ENCODE measurements at regions of chr2 and their contacts with region 1.

Region 1: GRCh38 chr2:27281855-27282559 is at the start of gene TRIM54:
- DNase-seq: no peak
- ATAC-seq: peak; percentile 37; a peak in 3 of 6 replicates
- H3K4me3 ChIP-seq: no peak within 1 kb of the TSS
- H3K27ac ChIP-seq: peak within 1 kb of the TSS; percentile 38 to 75
- H3K4me1 ChIP-seq: peaks cover 26% of the 10 kb centered on the region
- CTCF ChIP-seq: no peak
- EP300 ChIP-seq: no peak
- POLR2A ChIP-seq: no peak
- RAD21 ChIP-seq: no peak
- polyA plus RNA-seq, gene TRIM54: 0.05 and 0.14 TPM in 2 replicates

Region 2: DNA sequence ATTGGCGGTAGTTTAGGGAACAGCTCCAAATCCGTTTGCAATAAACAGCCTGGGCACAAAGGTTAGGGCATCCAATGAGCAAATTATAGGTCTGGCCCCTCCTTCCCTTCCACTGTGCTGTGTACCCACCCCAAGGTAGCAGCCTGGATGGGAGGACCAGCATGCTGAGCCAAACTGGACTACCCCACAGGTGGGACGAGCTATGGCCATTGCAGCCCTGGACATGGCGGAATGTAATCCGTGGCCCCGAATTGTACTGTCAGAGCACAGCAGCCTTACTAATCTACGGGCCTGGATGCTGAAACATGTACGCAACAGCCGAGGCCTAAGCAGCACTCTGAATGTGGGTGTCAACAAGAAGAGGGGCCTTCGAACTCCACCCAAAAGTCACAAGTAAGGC is 223.8 kb before region 1 on chr2:
- CTCF ChIA-PET with region 1: no interaction called
- POLR2A ChIA-PET with region 1: no interaction called
- DNase-seq: no peak
- ATAC-seq: no peak
- H3K4me3 ChIP-seq: no peak overlapping the region
- H3K27ac ChIP-seq: no peak overlapping the region
- H3K4me1 ChIP-seq: no peaks in the 10 kb centered on the region
- CTCF ChIP-seq: no peak
- EP300 ChIP-seq: no peak
- POLR2A ChIP-seq: no peak
- RAD21 ChIP-seq: no peak

Region 3: DNA sequence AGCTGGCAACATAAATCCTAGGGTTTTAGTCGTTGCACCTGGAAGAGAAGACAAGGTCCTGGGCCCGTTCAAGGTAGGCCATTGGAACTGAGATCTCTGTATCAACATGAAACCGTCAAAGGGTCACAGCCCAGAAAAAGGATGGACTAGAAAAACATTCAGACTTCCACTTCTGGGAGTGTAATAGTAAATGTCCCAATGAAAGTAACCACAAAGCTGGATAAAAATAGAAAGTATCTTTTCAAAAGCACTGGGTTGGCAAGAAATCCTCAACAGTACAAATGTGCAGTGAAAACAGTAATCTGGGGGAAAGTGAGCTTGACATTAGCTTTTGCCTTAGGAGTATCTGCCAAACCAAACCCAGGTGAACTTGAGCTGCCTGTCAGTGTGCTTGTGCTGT is 176.0 kb before region 1 on chr2:
- CTCF ChIA-PET with region 1: interaction called, 171 read pairs
- POLR2A ChIA-PET with region 1: interaction called, 3 read pairs
- DNase-seq: no peak
- ATAC-seq: no peak
- H3K4me3 ChIP-seq: no peak overlapping the region
- H3K27ac ChIP-seq: no peak overlapping the region
- H3K4me1 ChIP-seq: no peaks in the 10 kb centered on the region
- CTCF ChIP-seq: no peak
- EP300 ChIP-seq: no peak
- POLR2A ChIP-seq: no peak
- RAD21 ChIP-seq: no peak

Region 4: DNA sequence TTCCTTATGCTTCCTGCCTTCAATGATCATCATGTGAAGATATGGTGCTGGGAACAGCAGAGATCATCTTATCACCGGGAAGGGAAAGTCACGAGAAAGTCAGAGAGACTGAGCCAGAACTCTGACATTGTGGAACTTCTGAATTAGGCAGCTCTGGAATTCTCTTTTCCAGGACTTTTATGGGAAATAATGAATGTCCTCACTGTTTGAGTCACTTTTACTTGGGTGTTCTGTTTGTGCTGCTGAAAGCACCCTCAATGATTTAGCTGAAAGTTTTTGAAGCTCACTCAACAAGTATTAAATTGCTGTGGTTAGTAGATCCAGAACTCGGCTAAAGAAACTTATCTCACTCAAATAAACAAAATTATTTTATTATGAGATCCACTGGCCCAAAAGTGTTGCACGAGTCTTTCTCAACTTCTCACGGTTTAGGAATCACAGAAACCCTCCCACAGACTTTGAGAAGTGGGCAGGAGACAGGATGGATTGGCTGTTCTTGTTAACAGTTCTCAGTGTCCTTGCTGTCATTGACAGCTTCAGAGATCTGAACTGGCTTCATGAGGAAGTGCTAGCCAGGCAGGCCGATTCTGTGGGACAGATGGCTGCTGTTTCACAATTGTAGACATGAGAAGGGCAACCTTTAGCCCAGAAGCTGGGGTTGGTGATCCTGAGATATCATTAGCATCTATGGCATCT is 96.5 kb before region 1 on chr2:
- CTCF ChIA-PET with region 1: interaction called, 12 read pairs
- POLR2A ChIA-PET with region 1: no interaction called
- DNase-seq: no peak
- ATAC-seq: peak in 1 of 2 experiments; percentile 51; a peak in 3 of 6 replicates
- H3K4me3 ChIP-seq: no peak overlapping the region
- H3K27ac ChIP-seq: no peak overlapping the region
- H3K4me1 ChIP-seq: no peaks in the 10 kb centered on the region
- CTCF ChIP-seq: no peak
- EP300 ChIP-seq: no peak
- POLR2A ChIP-seq: no peak
- RAD21 ChIP-seq: no peak

Region 5: DNA sequence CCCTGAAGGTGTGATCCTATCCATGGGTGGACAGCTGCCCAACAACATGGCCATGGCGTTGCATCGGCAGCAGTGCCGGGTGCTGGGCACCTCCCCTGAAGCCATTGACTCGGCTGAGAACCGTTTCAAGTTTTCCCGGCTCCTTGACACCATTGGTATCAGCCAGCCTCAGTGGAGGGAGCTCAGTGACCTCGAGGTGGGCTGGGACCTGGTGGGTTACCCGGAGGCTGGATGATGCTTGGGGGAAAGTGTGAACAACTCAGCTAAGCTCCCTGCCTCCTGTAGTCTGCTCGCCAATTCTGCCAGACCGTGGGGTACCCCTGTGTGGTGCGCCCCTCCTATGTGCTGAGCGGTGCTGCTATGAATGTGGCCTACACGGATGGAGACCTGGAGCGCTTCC is 48.7 kb before region 1 on chr2:
- CTCF ChIA-PET with region 1: interaction called, 12 read pairs
- POLR2A ChIA-PET with region 1: no interaction called
- DNase-seq: no peak
- ATAC-seq: no peak
- H3K4me3 ChIP-seq: no peak overlapping the region
- H3K27ac ChIP-seq: no peak overlapping the region
- H3K4me1 ChIP-seq: no peaks in the 10 kb centered on the region
- CTCF ChIP-seq: no peak
- EP300 ChIP-seq: no peak
- POLR2A ChIP-seq: no peak
- RAD21 ChIP-seq: no peak

Region 6: GRCh38 chr2:27264753-27265535 is 17.1 kb before region 1 on chr2:
- CTCF ChIA-PET with region 1: interaction called, 302 read pairs
- POLR2A ChIA-PET with region 1: interaction called, 4 read pairs
- DNase-seq: peak; percentile 82 to 96
- ATAC-seq: peak; percentile 77 to 82
- H3K4me3 ChIP-seq: peak overlapping the region; percentile 75
- H3K27ac ChIP-seq: peak overlapping the region; percentile 32 to 73; a peak in 5 of 6 replicates
- H3K4me1 ChIP-seq: peaks cover 21% of the 10 kb centered on the region
- CTCF ChIP-seq: peak; percentile 71
- EP300 ChIP-seq: no peak
- POLR2A ChIP-seq: no peak
- RAD21 ChIP-seq: peak; percentile 40 to 59; a peak in 4 of 5 replicates

Region 7: DNA sequence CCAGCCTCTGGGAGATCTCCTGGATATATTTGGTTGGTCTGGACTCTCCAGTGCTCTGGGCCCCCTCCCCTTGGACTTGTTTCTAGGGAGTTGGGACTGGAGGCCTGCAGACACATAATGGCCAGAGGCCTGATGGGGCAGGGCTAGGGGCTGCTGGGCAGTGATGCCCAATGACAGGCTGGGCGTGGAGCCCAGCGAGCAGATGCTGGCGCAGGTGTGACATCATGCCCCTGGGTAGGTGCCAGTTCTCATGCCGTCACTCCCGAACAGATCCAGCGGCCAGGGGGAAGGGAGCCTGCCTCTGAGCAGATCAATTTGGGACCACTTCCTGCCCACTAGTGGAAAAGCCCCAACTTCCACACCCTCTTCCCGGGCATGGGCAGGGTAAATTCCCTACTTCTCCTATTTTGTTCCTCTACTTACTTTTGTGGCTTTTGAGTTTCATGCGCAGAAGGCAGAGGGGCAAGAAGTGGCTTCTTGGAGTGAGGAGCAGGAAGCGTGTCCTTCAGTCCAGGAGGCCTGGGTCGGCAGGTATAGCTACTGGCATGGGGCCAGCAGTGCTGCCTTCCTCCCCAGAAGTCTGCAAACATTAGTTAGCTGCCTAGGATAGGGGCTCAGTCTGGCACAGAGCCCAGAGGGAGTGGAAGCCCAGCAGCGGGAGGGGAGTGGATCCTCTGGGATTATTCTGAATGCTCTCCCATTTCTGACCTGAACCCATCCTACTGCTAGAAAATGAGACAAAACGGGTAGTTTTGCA is 34.8 kb after region 1 on chr2:
- CTCF ChIA-PET with region 1: interaction called, 25 read pairs
- POLR2A ChIA-PET with region 1: no interaction called
- DNase-seq: no peak
- ATAC-seq: no peak
- H3K4me3 ChIP-seq: no peak overlapping the region
- H3K27ac ChIP-seq: no peak overlapping the region
- H3K4me1 ChIP-seq: peaks cover 19% of the 10 kb centered on the region
- CTCF ChIP-seq: no peak
- EP300 ChIP-seq: no peak
- POLR2A ChIP-seq: no peak
- RAD21 ChIP-seq: no peak

Region 8: GRCh38 chr2:27336173-27336572 is 54.2 kb after region 1 on chr2:
- CTCF ChIA-PET with region 1: no interaction called
- POLR2A ChIA-PET with region 1: no interaction called
- DNase-seq: no peak
- ATAC-seq: no peak; a peak in 1 of 6 replicates
- H3K4me3 ChIP-seq: no peak overlapping the region
- H3K27ac ChIP-seq: no peak overlapping the region
- H3K4me1 ChIP-seq: no peaks in the 10 kb centered on the region
- CTCF ChIP-seq: no peak
- EP300 ChIP-seq: no peak
- POLR2A ChIP-seq: no peak
- RAD21 ChIP-seq: no peak

Region 9: GRCh38 chr2:27545348-27546141 is 263.5 kb after region 1 on chr2:
- CTCF ChIA-PET with region 1: no interaction called
- POLR2A ChIA-PET with region 1: no interaction called
- DNase-seq: no peak
- ATAC-seq: no peak
- H3K4me3 ChIP-seq: no peak overlapping the region
- H3K27ac ChIP-seq: no peak overlapping the region
- H3K4me1 ChIP-seq: peaks cover 6% of the 10 kb centered on the region; the same call in 2 of the 3 replicates
- CTCF ChIP-seq: no peak
- EP300 ChIP-seq: no peak
- POLR2A ChIP-seq: no peak
- RAD21 ChIP-seq: no peak

Region 10: GRCh38 chr2:27573452-27573851 is 291.4 kb after region 1 on chr2:
- CTCF ChIA-PET with region 1: no interaction called
- POLR2A ChIA-PET with region 1: no interaction called
- DNase-seq: no peak
- ATAC-seq: no peak
- H3K4me3 ChIP-seq: no peak overlapping the region
- H3K27ac ChIP-seq: no peak overlapping the region
- H3K4me1 ChIP-seq: no peaks in the 10 kb centered on the region
- CTCF ChIP-seq: no peak
- EP300 ChIP-seq: no peak
- POLR2A ChIP-seq: no peak
- RAD21 ChIP-seq: no peak